Activated CD4-positive, alpha-beta T cell treated with anti-CD3 and anti-CD28 coated beads for 36 hours (primary cell): ENCODE measurements at regions of chr1 and their contacts with region 1.

Region 1: DNA sequence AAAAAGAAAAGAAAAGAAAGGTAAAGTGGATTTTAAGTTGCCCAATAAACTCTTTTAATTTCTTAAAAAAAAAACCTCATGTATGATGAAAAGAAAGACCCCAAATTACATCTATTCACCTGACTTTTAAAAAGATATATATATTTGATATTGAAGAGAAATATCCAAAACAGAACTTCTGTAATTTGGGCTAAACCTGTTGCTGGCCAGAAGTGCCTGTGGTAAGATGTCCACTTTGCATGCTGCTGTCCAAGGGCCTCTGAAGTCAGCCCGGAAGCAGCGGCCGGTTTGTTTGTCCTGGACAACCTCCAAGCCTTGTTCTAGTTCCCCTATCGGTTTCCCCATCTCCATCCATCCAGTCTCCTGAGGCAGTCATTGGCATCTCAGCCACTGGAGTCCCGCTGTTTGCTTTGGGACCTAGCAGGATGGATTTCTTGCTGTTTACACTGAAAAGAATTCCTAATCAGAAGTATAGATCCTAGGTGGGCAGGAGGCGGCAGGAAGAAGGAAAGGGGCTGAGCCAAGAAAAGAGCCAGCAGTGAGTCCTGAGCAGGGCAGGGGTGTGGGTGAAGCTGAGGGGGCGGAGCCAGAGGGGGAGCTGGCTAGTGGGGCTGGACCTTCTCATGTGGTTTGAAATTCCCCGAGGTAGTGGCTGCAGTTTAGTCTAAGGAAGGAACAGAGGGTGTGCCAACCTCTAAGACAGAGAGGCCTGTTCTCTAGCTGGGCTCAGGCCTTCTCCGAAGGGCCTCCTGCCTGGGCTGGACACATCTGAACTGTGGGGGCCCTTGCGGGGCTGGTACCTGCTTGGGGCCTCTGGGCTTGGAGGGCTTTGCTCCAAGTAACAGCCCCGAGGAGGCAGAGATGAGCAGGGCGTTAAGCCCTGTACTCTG is 3.3 kb downstream of the NCMAP start:
- DNase-seq: no peak
- ATAC-seq: no peak
- H3K4me3 Mint-ChIP-seq: no peak overlapping the region
- H3K27ac Mint-ChIP-seq: no peak overlapping the region
- H3K4me1 Mint-ChIP-seq: peaks cover 4% of the 10 kb centered on the region
- H3K27me3 Mint-ChIP-seq: peaks cover 4% of the 10 kb centered on the region

Region 2: DNA sequence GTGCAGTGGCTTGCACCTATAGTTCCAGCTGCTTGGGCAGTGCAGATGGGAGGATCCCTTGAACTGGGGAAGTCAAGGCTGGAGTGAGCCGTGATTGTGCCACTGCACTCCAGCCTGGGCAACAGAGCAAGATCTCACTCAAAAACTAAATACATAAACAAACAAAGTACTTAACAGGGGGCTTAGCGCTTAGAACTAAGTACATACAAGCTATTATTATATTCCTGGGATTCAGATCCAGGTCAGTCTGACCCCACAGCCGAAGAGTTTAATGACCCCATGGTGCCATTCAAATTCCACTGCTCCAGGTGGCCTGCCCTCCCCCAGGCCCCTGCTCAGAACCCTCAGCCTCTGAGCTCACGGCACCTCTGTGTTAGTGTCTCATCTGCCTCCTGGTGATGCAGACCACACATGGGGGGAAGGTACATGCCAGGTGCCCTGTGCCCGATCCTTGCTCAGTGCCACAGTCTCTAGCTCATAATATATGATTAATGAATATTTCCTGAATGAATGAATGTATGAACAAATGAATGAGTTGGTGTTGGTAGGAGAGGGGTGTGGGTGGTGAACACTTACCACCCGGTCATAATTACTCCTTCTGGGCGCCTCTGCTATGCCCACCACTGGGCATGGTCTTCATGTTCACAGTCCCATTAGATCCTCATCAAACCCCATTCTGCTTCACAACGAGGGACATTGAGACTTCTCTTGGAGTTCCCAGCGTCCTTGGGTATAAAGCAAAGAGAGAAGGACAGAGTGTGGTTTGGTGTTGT is 11.4 kb after region 1 on chr1:
- CTCF ChIA-PET with region 1: no interaction called
- POLR2A ChIA-PET with region 1: no interaction called
- intact Hi-C with region 1: loop called in 1 of 2 experiments (anchors 2 kb)
- DNase-seq: no peak
- ATAC-seq: no peak
- H3K4me3 Mint-ChIP-seq: no peak overlapping the region
- H3K27ac Mint-ChIP-seq: no peak overlapping the region
- H3K4me1 Mint-ChIP-seq: peaks cover 13% of the 10 kb centered on the region
- H3K27me3 Mint-ChIP-seq: no peaks in the 10 kb centered on the region